ENCODE measurements at regions of chr2 and their contacts with region 1.

Region 1: GRCh38 chr2:96960153-96960961 is 26.0 kb downstream of the FAM178B start:
- DNase-seq: peak; percentile 58 to 87 (median 75)
- ATAC-seq: peak; percentile 50
- H3K4me3 ChIP-seq: no peak overlapping the region
- H3K4me3 Mint-ChIP-seq: peak overlapping the region; percentile 37 to 83 (median 64)
- H3K27ac ChIP-seq: no peak overlapping the region
- H3K27ac Mint-ChIP-seq: peak overlapping the region; percentile 55 to 99 (median 92)
- H3K4me1 ChIP-seq: peaks cover 42 to 47% of the 10 kb centered on the region in 2 donors
- H3K4me1 Mint-ChIP-seq: peaks cover 36 to 57% (median 53%) of the 10 kb centered on the region in 7 donors
- H3K27me3 ChIP-seq: no peaks in the 10 kb centered on the region
- H3K27me3 Mint-ChIP-seq: peaks cover 0 to 2% (median 0%) of the 10 kb centered on the region in 5 donors

Region 2: DNA sequence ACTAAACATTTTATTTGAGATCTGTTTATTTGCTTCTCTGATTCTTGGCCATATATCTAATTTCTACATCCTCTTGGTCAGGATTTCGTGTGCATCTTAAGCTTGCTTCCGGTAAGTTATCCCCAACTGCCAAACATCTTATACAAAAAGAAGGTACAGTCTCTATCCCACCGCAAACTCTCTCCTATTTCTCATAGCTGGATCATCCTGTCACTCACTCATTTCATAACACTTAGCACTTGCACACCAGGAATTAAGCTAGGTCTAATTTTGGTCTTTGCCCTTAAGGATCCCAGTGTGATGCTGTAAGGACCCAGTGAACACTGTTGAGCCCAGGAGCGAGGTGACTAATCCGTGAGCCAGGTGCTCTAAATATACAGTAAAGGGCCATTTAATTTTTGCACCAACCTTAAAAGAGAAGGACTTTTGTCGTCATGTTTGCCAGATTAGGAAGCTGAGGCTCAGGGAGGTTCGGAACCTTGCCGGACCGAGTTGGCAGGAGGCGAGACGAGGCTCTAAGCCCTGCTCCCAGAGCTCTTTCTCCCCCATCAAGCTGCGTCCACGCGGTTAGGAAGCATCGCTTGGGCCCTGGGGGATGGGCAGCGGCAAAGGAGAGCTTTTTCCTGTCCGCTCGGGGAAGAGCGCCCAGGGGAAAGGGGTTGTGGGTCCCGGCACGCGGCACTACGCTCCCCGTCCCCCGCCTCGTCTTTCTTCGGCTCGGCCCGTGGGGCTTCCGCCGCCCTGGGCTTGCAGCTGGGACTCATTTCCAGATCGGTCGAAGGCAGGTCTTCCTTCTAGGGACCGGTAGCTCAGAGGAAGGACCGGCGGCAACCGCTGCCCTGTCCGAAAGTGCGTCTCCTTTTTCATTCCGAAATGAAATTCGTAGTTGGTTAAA is 639.4 kb before region 1 on chr2:
- CTCF ChIA-PET with region 1: no interaction called
- POLR2A ChIA-PET with region 1: no interaction called
- intact Hi-C with region 1: loop called in 1 of 2 experiments (anchors 10 kb)
- DNase-seq: peak in 3 of 9 donors; percentile 13 to 62 (median 19)
- ATAC-seq: peak; percentile 28
- H3K4me3 ChIP-seq: peak overlapping the region; percentile 82
- H3K4me3 Mint-ChIP-seq: peak overlapping the region; percentile 86 to 95 (median 91)
- H3K27ac ChIP-seq: peak overlapping the region; percentile 53
- H3K27ac Mint-ChIP-seq: peak overlapping the region in 7 of 9 donors; percentile 6 to 89 (median 62)
- H3K4me1 ChIP-seq: peaks cover 21 to 42% of the 10 kb centered on the region in 2 donors
- H3K4me1 Mint-ChIP-seq: peaks cover 7 to 67% (median 33%) of the 10 kb centered on the region in 7 donors
- H3K27me3 ChIP-seq: no peaks in the 10 kb centered on the region
- H3K27me3 Mint-ChIP-seq: peaks cover 0 to 7% (median 0%) of the 10 kb centered on the region in 5 donors

Region 3: DNA sequence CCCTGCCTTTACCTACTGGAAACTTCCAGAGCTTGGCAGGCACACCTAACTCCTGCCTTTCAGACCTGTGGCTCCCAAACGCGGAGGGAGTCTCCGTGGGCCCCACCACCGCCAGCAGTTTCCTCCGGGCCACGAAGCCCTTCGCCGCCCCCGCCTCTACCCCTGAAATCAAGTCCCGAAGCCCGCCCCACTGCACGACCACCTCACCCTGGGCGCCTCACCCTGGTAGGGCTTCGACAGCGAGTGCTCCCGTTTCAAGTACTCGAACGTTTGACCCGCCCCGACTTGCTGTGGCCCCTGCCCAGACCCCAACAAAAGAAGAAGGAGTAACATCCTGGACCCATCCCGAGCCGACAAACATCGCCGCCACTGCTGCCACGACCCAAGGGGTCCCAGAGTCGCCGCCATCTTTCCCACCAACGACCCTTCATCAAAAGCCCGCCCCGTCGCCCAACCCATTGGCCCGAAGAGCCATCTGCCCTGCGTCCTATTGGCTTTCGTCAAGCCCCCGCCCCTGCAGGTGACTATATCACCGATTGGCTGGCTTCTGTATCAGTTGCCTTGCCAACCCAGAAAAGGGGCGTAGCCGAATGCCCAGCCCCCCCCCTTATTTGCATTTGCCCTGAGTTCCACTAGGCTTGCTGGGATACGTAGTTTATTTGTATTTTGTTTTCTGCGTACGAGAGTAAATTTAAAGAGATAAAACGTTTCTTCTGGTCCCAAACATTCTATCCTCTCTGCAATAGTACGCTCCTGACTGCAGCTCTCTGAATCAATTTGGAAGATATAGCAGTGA is 220.5 kb before region 1 on chr2 and contains the start of gene LMAN2L:
- CTCF ChIA-PET with region 1: interaction called, 3 read pairs
- POLR2A ChIA-PET with region 1: no interaction called
- intact Hi-C with region 1: loop called in 1 of 2 experiments (anchors 1 kb)
- DNase-seq: peak; percentile 78 to 99 (median 94)
- ATAC-seq: peak; percentile 100
- H3K4me3 ChIP-seq: peak within 1 kb of the TSS; percentile 70
- H3K4me3 Mint-ChIP-seq: peak within 1 kb of the TSS; percentile 92 to 100 (median 97)
- H3K27ac ChIP-seq: peak within 1 kb of the TSS; percentile 75
- H3K27ac Mint-ChIP-seq: peak within 1 kb of the TSS; percentile 83 to 96 (median 90)
- H3K4me1 ChIP-seq: peaks cover 6% of the 10 kb centered on the region in 2 donors
- H3K4me1 Mint-ChIP-seq: peaks cover 20 to 48% (median 37%) of the 10 kb centered on the region in 7 donors
- H3K27me3 ChIP-seq: no peaks in the 10 kb centered on the region
- H3K27me3 Mint-ChIP-seq: no peaks in the 10 kb centered on the region
- total RNA-seq, gene LMAN2L: 5.0 to 10.9 (median 9.2) TPM

Region 4: DNA sequence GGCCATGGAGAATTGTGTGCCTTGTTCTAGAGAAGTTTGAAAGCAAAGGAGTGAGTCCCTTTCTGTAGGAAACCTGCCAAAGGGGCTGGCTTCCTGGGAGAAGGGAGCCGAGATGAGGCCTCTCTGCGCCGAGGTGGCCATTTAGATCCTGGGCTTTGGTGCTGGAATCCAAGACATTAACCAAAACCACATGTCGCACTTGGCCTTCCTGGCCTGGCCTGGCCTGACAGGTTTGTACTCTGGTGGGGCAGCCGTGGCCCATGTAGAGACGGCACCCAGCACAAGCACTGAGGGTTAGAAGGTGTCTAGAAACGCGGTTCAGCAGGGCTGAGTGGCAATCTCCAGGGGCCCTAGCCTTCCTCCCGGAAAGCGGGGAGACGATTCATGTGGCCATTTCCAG is 137.2 kb before region 1 on chr2:
- CTCF ChIA-PET with region 1: no interaction called
- POLR2A ChIA-PET with region 1: no interaction called
- intact Hi-C with region 1: no loop called
- DNase-seq: no peak
- ATAC-seq: no peak
- H3K4me3 ChIP-seq: no peak overlapping the region
- H3K4me3 Mint-ChIP-seq: no peak overlapping the region
- H3K27ac ChIP-seq: no peak overlapping the region
- H3K27ac Mint-ChIP-seq: no peak overlapping the region
- H3K4me1 ChIP-seq: peaks cover 25 to 34% of the 10 kb centered on the region in 2 donors
- H3K4me1 Mint-ChIP-seq: peaks cover 32 to 53% (median 44%) of the 10 kb centered on the region in 7 donors
- H3K27me3 ChIP-seq: no peaks in the 10 kb centered on the region
- H3K27me3 Mint-ChIP-seq: no peaks in the 10 kb centered on the region

Region 5: DNA sequence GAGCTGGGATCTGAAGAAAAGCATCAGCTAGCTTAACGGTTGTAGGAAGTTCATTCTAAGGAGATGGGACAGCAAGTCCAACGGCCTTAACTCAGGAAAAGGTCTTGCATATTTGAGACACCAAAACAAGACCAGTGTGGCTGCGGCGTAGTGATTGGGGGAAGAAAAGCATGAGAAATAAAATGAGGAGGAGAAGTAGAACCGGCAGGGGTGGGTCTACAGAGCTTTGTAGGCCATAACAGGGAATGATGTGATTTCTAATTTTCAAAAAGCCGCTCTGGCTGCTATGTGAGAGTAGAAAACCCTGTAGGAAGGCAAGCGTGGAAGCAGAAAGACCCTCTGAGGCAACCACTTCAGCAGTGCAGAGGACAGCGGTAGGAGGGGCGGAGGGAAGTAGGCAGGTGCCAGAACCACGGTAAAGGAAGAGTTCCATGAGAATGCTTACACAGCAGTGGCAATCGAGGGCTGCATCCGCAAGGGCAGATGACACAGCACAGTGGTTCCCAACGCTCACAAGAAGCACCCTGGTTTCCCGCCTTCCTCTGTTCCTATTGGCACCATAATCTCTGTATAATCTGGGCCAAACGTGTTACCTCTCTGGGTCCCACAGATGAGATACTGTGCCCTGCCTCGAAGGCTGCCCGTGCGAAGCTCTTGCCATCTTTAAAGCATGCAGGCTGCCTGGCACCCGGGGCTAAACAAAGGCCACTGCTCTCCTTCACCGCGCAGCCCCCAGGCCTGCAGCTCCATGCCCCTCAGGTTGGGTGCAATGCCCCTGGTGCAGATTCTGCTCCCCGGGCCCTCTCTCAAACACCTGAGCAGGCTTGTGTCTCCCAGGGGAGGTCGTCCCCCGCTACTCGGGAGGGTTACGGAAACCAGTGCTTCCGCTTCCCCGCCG is 103.3 kb before region 1 on chr2:
- CTCF ChIA-PET with region 1: interaction called, 144 read pairs
- POLR2A ChIA-PET with region 1: interaction called, 288 read pairs
- intact Hi-C with region 1: loop called (anchors 1 kb)
- DNase-seq: peak in 5 of 9 donors; percentile 27 to 39 (median 35)
- ATAC-seq: no peak
- H3K4me3 ChIP-seq: peak overlapping the region; percentile 72
- H3K4me3 Mint-ChIP-seq: peak overlapping the region; percentile 85 to 93 (median 89)
- H3K27ac ChIP-seq: peak overlapping the region; percentile 79
- H3K27ac Mint-ChIP-seq: peak overlapping the region; percentile 38 to 92 (median 84)
- H3K4me1 ChIP-seq: peaks cover 14 to 16% of the 10 kb centered on the region in 2 donors
- H3K4me1 Mint-ChIP-seq: peaks cover 21 to 57% (median 43%) of the 10 kb centered on the region in 7 donors
- H3K27me3 ChIP-seq: no peaks in the 10 kb centered on the region
- H3K27me3 Mint-ChIP-seq: no peaks in the 10 kb centered on the region

Region 6: GRCh38 chr2:96913398-96914202 is 46.8 kb before region 1 on chr2:
- CTCF ChIA-PET with region 1: interaction called, 4 read pairs
- POLR2A ChIA-PET with region 1: interaction called, 6 read pairs
- intact Hi-C with region 1: loop called (anchors 1 to 2 kb)
- DNase-seq: peak in 8 of 9 donors; percentile 55 to 78 (median 72)
- ATAC-seq: peak; percentile 85
- H3K4me3 ChIP-seq: peak overlapping the region; percentile 68
- H3K4me3 Mint-ChIP-seq: peak overlapping the region; percentile 79 to 94 (median 88)
- H3K27ac ChIP-seq: peak overlapping the region; percentile 61
- H3K27ac Mint-ChIP-seq: peak overlapping the region; percentile 90 to 100 (median 97)
- H3K4me1 ChIP-seq: peaks cover 33 to 38% of the 10 kb centered on the region in 2 donors
- H3K4me1 Mint-ChIP-seq: peaks cover 45 to 96% (median 89%) of the 10 kb centered on the region in 7 donors
- H3K27me3 ChIP-seq: no peaks in the 10 kb centered on the region
- H3K27me3 Mint-ChIP-seq: peaks cover 0 to 7% (median 0%) of the 10 kb centered on the region in 5 donors

Region 7: GRCh38 chr2:96940001-96940615 is 20.2 kb before region 1 on chr2:
- CTCF ChIA-PET with region 1: interaction called, 5 read pairs
- POLR2A ChIA-PET with region 1: interaction called, 4 read pairs
- intact Hi-C with region 1: loop called in 1 of 2 experiments (anchors 1 kb)
- DNase-seq: no peak
- ATAC-seq: no peak
- H3K4me3 ChIP-seq: no peak overlapping the region
- H3K4me3 Mint-ChIP-seq: peak overlapping the region in 8 of 10 donors; percentile 50 to 92 (median 78)
- H3K27ac ChIP-seq: no peak overlapping the region
- H3K27ac Mint-ChIP-seq: peak overlapping the region in 8 of 9 donors; percentile 43 to 94 (median 80)
- H3K4me1 ChIP-seq: peaks cover 19 to 25% of the 10 kb centered on the region in 2 donors
- H3K4me1 Mint-ChIP-seq: peaks cover 24 to 55% (median 46%) of the 10 kb centered on the region in 7 donors
- H3K27me3 ChIP-seq: no peaks in the 10 kb centered on the region
- H3K27me3 Mint-ChIP-seq: peaks cover 0 to 10% (median 0%) of the 10 kb centered on the region in 5 donors

Region 8: GRCh38 chr2:97011977-97012565 is 51.7 kb after region 1 on chr2:
- CTCF ChIA-PET with region 1: interaction called, 4 read pairs
- POLR2A ChIA-PET with region 1: no interaction called
- intact Hi-C with region 1: loop called (anchors 1 to 2 kb)
- DNase-seq: peak in 7 of 9 donors; percentile 25 to 67 (median 50)
- ATAC-seq: no peak
- H3K4me3 ChIP-seq: no peak overlapping the region
- H3K4me3 Mint-ChIP-seq: no peak overlapping the region
- H3K27ac ChIP-seq: no peak overlapping the region
- H3K27ac Mint-ChIP-seq: no peak overlapping the region
- H3K4me1 ChIP-seq: no peaks in the 10 kb centered on the region
- H3K4me1 Mint-ChIP-seq: peaks cover 0 to 8% (median 0%) of the 10 kb centered on the region in 7 donors
- H3K27me3 ChIP-seq: no peaks in the 10 kb centered on the region
- H3K27me3 Mint-ChIP-seq: peaks cover 0 to 59% (median 10%) of the 10 kb centered on the region in 5 donors